ENCODE measurements at regions of chr14 and their contacts with region 1.

Region 1: GRCh38 chr14:50860478-50861086 is 11.3 kb upstream of the ABHD12B start:
- DNase-seq: peak; percentile 78 to 87
- H3K4me3 ChIP-seq: no peak overlapping the region
- H3K4me3 Mint-ChIP-seq: peak overlapping the region; percentile 67
- H3K27ac Mint-ChIP-seq: no peak overlapping the region
- H3K4me1 ChIP-seq: no peaks in the 10 kb centered on the region
- H3K4me1 Mint-ChIP-seq: no peaks in the 10 kb centered on the region
- H3K27me3 ChIP-seq: no peaks in the 10 kb centered on the region; the same call in 1 of the 2 replicates
- H3K27me3 Mint-ChIP-seq: peaks cover 3% of the 10 kb centered on the region
- CTCF ChIP-seq: peak; percentile 73 to 80

Region 2: DNA sequence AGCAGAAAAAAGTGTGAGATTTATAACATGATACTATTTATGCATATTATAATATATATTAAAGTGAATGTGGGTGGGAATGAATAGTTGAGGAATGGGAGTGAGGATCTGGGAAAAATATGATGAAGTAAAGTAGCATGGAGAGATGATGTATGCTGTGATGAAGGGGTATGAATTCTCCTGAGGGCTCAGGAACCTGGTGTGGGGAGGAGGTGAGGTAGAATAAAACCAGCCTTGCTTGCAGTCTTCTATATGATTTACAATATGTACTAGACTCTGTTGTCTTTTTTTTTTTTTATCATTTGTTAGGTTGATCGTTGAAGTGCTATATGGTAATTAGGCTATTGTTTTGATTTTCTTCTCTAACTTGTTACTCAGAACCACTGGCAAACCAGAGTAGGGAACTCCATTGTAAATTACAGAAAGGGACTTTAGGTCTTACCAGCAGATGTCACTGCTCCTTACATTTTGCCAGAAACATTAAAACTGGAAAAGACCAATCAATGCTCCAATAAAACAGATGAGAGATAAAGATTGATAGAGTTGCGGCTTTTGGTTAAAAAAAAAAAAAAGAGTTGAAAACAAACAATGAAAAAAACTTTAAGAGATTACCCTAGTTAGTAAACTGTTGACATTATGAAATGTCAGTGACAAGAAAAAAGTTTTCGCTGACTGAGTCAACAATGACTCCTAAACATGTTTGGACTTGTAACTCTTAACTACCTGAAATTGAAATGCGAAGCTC is 260.7 kb before region 1 on chr14:
- CTCF ChIA-PET with region 1: interaction called, 6 read pairs
- POLR2A ChIA-PET with region 1: no interaction called
- intact Hi-C with region 1: loop called (anchors 2 kb)
- DNase-seq: peak in 1 of 2 experiments; percentile 37
- H3K4me3 ChIP-seq: no peak overlapping the region
- H3K4me3 Mint-ChIP-seq: peak overlapping the region; percentile 30
- H3K27ac Mint-ChIP-seq: no peak overlapping the region
- H3K4me1 ChIP-seq: no peaks in the 10 kb centered on the region
- H3K4me1 Mint-ChIP-seq: peaks cover 9% of the 10 kb centered on the region
- H3K27me3 ChIP-seq: no peaks in the 10 kb centered on the region
- H3K27me3 Mint-ChIP-seq: no peaks in the 10 kb centered on the region
- CTCF ChIP-seq: peak; percentile 52 to 55

Region 3: DNA sequence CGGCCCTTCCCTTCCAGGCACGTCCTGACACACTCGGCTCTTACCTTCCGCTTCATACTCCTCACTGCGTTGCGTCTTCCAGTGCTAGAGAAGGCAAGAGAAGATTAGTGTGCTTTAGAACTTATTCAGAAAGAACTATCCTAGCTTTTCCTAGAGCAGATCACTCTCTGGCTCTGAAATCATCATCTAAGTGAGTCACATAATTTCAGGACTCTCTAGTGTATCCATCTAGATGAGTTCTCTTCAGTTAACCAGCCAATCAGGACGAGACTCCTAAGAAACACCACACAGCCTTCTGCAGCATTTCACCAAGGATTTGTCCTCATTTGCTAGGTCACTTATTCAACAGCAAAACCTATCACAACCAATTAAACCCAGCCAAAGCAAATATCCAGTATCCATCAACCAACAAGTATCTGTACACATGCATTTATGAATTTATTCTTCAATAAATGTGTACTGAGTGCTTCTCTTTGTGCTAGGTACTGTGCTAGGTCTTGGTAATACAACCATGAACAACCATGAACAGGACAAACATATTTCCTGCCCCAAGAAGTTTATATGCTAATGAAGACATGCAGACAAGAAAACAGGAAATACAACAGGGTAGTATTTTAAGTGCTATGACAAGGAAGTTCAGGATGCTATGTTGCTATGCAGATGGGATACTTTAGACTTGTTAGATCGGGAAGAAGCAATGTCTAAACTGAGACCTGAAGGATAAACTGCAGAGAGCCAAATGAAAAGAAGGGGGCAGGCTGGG is 81.7 kb before region 1 on chr14:
- CTCF ChIA-PET with region 1: interaction called, 13 read pairs
- POLR2A ChIA-PET with region 1: no interaction called
- intact Hi-C with region 1: loop called (anchors 2 kb)
- DNase-seq: no peak
- H3K4me3 ChIP-seq: no peak overlapping the region
- H3K4me3 Mint-ChIP-seq: no peak overlapping the region
- H3K27ac Mint-ChIP-seq: no peak overlapping the region
- H3K4me1 ChIP-seq: no peaks in the 10 kb centered on the region
- H3K4me1 Mint-ChIP-seq: no peaks in the 10 kb centered on the region
- H3K27me3 ChIP-seq: no peaks in the 10 kb centered on the region
- H3K27me3 Mint-ChIP-seq: no peaks in the 10 kb centered on the region
- CTCF ChIP-seq: no peak

Region 4: GRCh38 chr14:50830044-50830931 is 30.3 kb before region 1 on chr14:
- CTCF ChIA-PET with region 1: interaction called, 9 read pairs
- POLR2A ChIA-PET with region 1: interaction called, 13 read pairs
- intact Hi-C with region 1: no loop called
- DNase-seq: peak; percentile 43
- H3K4me3 ChIP-seq: peak overlapping the region; percentile 71
- H3K4me3 Mint-ChIP-seq: peak overlapping the region; percentile 66
- H3K27ac Mint-ChIP-seq: no peak overlapping the region
- H3K4me1 ChIP-seq: peaks cover 33% of the 10 kb centered on the region
- H3K4me1 Mint-ChIP-seq: peaks cover 23% of the 10 kb centered on the region
- H3K27me3 ChIP-seq: peaks cover 7% of the 10 kb centered on the region; the same call in 1 of the 2 replicates
- H3K27me3 Mint-ChIP-seq: peaks cover 22% of the 10 kb centered on the region
- CTCF ChIP-seq: no peak

Region 5: GRCh38 chr14:50839048-50839447 is 21.5 kb before region 1 on chr14:
- CTCF ChIA-PET with region 1: interaction called, 13 read pairs
- POLR2A ChIA-PET with region 1: no interaction called
- intact Hi-C with region 1: no loop called
- DNase-seq: no peak
- H3K4me3 ChIP-seq: no peak overlapping the region
- H3K4me3 Mint-ChIP-seq: no peak overlapping the region
- H3K27ac Mint-ChIP-seq: no peak overlapping the region
- H3K4me1 ChIP-seq: peaks cover 4% of the 10 kb centered on the region; the same call in 1 of the 2 replicates
- H3K4me1 Mint-ChIP-seq: no peaks in the 10 kb centered on the region
- H3K27me3 ChIP-seq: peaks cover 2% of the 10 kb centered on the region; the same call in 1 of the 2 replicates
- H3K27me3 Mint-ChIP-seq: peaks cover 16% of the 10 kb centered on the region
- CTCF ChIP-seq: no peak

Region 6: GRCh38 chr14:50906326-50907065 is 45.9 kb after region 1 on chr14:
- CTCF ChIA-PET with region 1: no interaction called
- POLR2A ChIA-PET with region 1: no interaction called
- intact Hi-C with region 1: no loop called
- DNase-seq: no peak
- H3K4me3 ChIP-seq: no peak overlapping the region
- H3K4me3 Mint-ChIP-seq: no peak overlapping the region
- H3K27ac Mint-ChIP-seq: no peak overlapping the region
- H3K4me1 ChIP-seq: no peaks in the 10 kb centered on the region; the same call in 1 of the 2 replicates
- H3K4me1 Mint-ChIP-seq: no peaks in the 10 kb centered on the region
- H3K27me3 ChIP-seq: no peaks in the 10 kb centered on the region
- H3K27me3 Mint-ChIP-seq: no peaks in the 10 kb centered on the region
- CTCF ChIP-seq: no peak

Region 7: GRCh38 chr14:50943943-50944646 is 83.5 kb after region 1 on chr14 and contains the start of gene PYGL:
- CTCF ChIA-PET with region 1: interaction called, 10 read pairs
- POLR2A ChIA-PET with region 1: no interaction called
- intact Hi-C with region 1: no loop called
- DNase-seq: peak; percentile 79 to 88
- H3K4me3 ChIP-seq: peak within 1 kb of the TSS; percentile 65
- H3K4me3 Mint-ChIP-seq: peak within 1 kb of the TSS; percentile 96
- H3K27ac Mint-ChIP-seq: peak within 1 kb of the TSS; percentile 77
- H3K4me1 ChIP-seq: peaks cover 6% of the 10 kb centered on the region
- H3K4me1 Mint-ChIP-seq: peaks cover 18% of the 10 kb centered on the region
- H3K27me3 ChIP-seq: no peaks in the 10 kb centered on the region
- H3K27me3 Mint-ChIP-seq: no peaks in the 10 kb centered on the region
- CTCF ChIP-seq: no peak
- total RNA-seq, gene PYGL: 80.8 and 98.1 TPM in 2 replicates

Measured in Caco-2 (cell line).